ENCODE measurements at regions of chr6 and their contacts with region 1.

Region 1: DNA sequence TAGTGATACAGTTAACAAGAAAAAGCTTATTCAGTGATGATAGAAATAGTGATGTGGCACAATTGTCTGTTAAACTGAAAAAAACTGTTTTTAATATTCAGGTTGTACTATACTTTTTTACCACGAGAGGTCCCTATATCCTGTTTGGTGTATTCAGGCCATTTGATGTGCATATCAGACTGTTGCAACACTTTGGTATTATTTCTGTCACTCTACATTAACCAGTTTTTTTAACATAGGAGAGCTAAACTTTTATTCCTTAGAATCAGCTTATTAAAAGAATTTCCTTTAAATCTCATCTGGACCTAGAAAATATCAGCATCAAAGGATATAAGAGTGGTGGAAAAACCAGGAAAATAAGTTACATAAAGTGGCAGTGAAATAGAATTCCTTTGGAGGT is 36.8 kb downstream of the TSPYL4 start:
- DNase-seq: peak in 2 of 9 experiments; percentile 52 to 59
- ATAC-seq: peak; percentile 87
- H3K4me3 ChIP-seq: no peak overlapping the region
- H3K4me3 Mint-ChIP-seq: no peak overlapping the region
- H3K27ac ChIP-seq: no peak overlapping the region
- H3K27ac Mint-ChIP-seq: peak overlapping the region; percentile 27
- H3K4me1 ChIP-seq: no peaks in the 10 kb centered on the region
- H3K4me1 Mint-ChIP-seq: peaks cover 5% of the 10 kb centered on the region
- H3K27me3 ChIP-seq: no peaks in the 10 kb centered on the region
- H3K27me3 Mint-ChIP-seq: no peaks in the 10 kb centered on the region
- CTCF ChIP-seq: peak; percentile 69

Region 2: GRCh38 chr6:116268589-116269293 is 51.7 kb after region 1 on chr6:
- CTCF ChIA-PET with region 1: no interaction called
- POLR2A ChIA-PET with region 1: no interaction called
- intact Hi-C with region 1: loop called (anchors 5 kb)
- DNase-seq: peak in 2 of 9 experiments; percentile 69 to 79
- ATAC-seq: peak; percentile 82
- H3K4me3 ChIP-seq: no peak overlapping the region
- H3K4me3 Mint-ChIP-seq: no peak overlapping the region
- H3K27ac ChIP-seq: no peak overlapping the region
- H3K27ac Mint-ChIP-seq: peak overlapping the region; percentile 9
- H3K4me1 ChIP-seq: peaks cover 17% of the 10 kb centered on the region
- H3K4me1 Mint-ChIP-seq: peaks cover 42% of the 10 kb centered on the region
- H3K27me3 ChIP-seq: no peaks in the 10 kb centered on the region
- H3K27me3 Mint-ChIP-seq: no peaks in the 10 kb centered on the region
- CTCF ChIP-seq: peak; percentile 82

Region 3: GRCh38 chr6:116561377-116562018 is 344.4 kb after region 1 on chr6:
- CTCF ChIA-PET with region 1: no interaction called
- POLR2A ChIA-PET with region 1: no interaction called
- intact Hi-C with region 1: loop called in 1 of 2 experiments (anchors 5 kb)
- DNase-seq: peak; percentile 29 to 77 (median 67)
- ATAC-seq: peak; percentile 93
- H3K4me3 ChIP-seq: no peak overlapping the region
- H3K4me3 Mint-ChIP-seq: no peak overlapping the region
- H3K27ac ChIP-seq: no peak overlapping the region
- H3K27ac Mint-ChIP-seq: no peak overlapping the region
- H3K4me1 ChIP-seq: no peaks in the 10 kb centered on the region
- H3K4me1 Mint-ChIP-seq: peaks cover 3% of the 10 kb centered on the region
- H3K27me3 ChIP-seq: no peaks in the 10 kb centered on the region
- H3K27me3 Mint-ChIP-seq: peaks cover 9% of the 10 kb centered on the region
- CTCF ChIP-seq: peak; percentile 95

Region 4: GRCh38 chr6:116648156-116648555 is 431.1 kb after region 1 on chr6:
- CTCF ChIA-PET with region 1: no interaction called
- POLR2A ChIA-PET with region 1: no interaction called
- intact Hi-C with region 1: loop called (anchors 5 to 10 kb)
- DNase-seq: no peak
- ATAC-seq: no peak
- H3K4me3 ChIP-seq: no peak overlapping the region
- H3K4me3 Mint-ChIP-seq: no peak overlapping the region
- H3K27ac ChIP-seq: no peak overlapping the region
- H3K27ac Mint-ChIP-seq: no peak overlapping the region
- H3K4me1 ChIP-seq: no peaks in the 10 kb centered on the region
- H3K4me1 Mint-ChIP-seq: no peaks in the 10 kb centered on the region
- H3K27me3 ChIP-seq: no peaks in the 10 kb centered on the region
- H3K27me3 Mint-ChIP-seq: no peaks in the 10 kb centered on the region
- CTCF ChIP-seq: no peak

Region 5: DNA sequence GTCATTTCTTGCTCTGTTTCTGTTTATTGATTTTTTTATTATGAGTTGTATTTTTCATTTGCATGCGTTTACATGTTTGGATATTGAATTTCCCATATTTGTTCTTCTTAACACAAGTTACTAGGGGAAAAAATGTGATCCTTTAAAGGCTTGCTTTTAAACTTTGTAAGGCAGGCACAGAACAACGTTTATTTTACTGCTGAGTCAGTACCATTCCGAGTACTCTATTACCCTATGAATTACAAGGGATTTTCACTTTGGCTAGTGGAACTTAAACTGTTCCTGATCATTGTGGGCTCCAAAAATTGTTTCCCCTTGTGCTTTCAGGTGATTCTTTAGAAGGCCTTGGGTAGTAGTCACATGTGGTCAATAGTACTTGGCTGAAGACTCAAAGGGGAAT is 519.9 kb after region 1 on chr6:
- CTCF ChIA-PET with region 1: no interaction called
- POLR2A ChIA-PET with region 1: no interaction called
- intact Hi-C with region 1: no loop called
- DNase-seq: no peak
- ATAC-seq: no peak
- H3K4me3 ChIP-seq: no peak overlapping the region
- H3K4me3 Mint-ChIP-seq: no peak overlapping the region
- H3K27ac ChIP-seq: no peak overlapping the region
- H3K27ac Mint-ChIP-seq: no peak overlapping the region
- H3K4me1 ChIP-seq: no peaks in the 10 kb centered on the region
- H3K4me1 Mint-ChIP-seq: no peaks in the 10 kb centered on the region
- H3K27me3 ChIP-seq: no peaks in the 10 kb centered on the region
- H3K27me3 Mint-ChIP-seq: no peaks in the 10 kb centered on the region
- CTCF ChIP-seq: no peak

Measured in CD8-positive, alpha-beta T cell (primary cell).